HepG2 (cell line): ENCODE measurements at regions of chr3 and their contacts with region 1.

Region 1: DNA sequence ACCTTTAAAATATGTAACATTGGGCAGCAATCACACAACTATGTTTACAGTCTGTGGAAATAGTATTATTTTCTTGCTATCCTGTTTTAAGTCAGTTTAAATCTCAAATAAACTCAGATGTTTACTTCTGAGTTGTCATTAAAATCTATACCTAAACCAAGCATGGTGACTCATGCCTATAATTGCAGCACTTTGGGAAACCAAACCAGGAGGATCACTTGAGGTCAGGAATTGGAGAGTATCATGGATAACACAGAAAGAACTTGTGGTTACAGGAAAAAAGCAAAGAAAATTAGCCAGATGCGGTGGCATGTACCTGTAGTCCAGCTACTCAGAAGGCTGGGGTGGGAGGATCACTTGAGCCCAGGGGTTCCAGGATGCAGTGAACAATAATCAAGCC is 631.6 kb upstream of the EPHA6 start:
- DNase-seq: no peak
- ATAC-seq: no peak
- H3K4me3 ChIP-seq: no peak overlapping the region
- H3K27ac ChIP-seq: no peak overlapping the region
- H3K4me1 ChIP-seq: no peaks in the 10 kb centered on the region
- H3K27me3 ChIP-seq: no peaks in the 10 kb centered on the region
- CTCF ChIP-seq: no peak
- EP300 ChIP-seq: no peak
- POLR2A ChIP-seq: no peak
- RAD21 ChIP-seq: no peak

Region 2: GRCh38 chr3:94573337-94573736 is 1609.4 kb before region 1 on chr3:
- CTCF ChIA-PET with region 1: no interaction called
- POLR2A ChIA-PET with region 1: no interaction called
- in situ Hi-C with region 1: no loop called
- intact Hi-C with region 1: loop called (anchors 5 kb)
- DNase-seq: no peak
- ATAC-seq: no peak
- H3K4me3 ChIP-seq: no peak overlapping the region
- H3K27ac ChIP-seq: no peak overlapping the region
- H3K4me1 ChIP-seq: no peaks in the 10 kb centered on the region
- H3K27me3 ChIP-seq: no peaks in the 10 kb centered on the region
- CTCF ChIP-seq: no peak
- EP300 ChIP-seq: no peak
- POLR2A ChIP-seq: no peak
- RAD21 ChIP-seq: no peak

Region 3: DNA sequence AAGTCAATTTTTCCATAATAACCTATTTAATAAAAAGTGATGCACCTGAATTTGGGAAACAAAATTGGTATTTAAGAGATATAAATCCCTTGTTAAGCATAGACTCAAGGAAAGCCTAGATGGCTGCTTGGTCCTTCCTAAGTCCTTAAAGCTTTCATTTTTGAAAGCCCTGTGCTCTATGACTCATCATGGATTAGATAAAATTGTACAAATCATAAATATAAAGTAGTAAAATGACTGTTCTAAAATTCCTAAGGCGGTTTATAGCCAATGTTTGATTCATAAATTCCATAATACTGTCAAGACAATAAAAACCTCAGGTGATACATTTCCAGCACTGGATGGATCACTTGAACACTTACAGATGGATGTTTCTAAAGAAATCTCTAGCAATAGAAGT is 99.1 kb before region 1 on chr3:
- CTCF ChIA-PET with region 1: no interaction called
- POLR2A ChIA-PET with region 1: no interaction called
- in situ Hi-C with region 1: no loop called
- intact Hi-C with region 1: no loop called
- DNase-seq: no peak
- ATAC-seq: no peak
- H3K4me3 ChIP-seq: no peak overlapping the region
- H3K27ac ChIP-seq: no peak overlapping the region
- H3K4me1 ChIP-seq: no peaks in the 10 kb centered on the region
- H3K27me3 ChIP-seq: no peaks in the 10 kb centered on the region
- CTCF ChIP-seq: no peak
- EP300 ChIP-seq: no peak
- POLR2A ChIP-seq: no peak
- RAD21 ChIP-seq: no peak

Region 4: DNA sequence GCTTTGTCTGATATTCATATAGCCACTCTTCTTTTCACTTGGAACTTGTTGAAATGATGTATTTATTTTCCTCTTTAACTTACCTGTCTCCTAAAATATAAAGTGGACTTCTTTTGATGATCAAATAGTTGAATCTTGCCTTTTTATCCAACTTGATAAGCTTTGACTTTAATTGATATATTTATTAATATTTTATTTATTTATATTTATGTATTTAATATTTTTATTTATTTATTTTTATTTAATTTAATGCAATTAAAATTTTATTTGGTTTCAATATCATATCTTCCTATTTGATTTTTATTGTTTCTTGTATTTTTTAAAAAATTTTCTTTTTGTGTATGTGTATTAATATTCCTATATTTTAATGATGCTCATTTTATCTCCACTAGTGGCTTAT is 76.5 kb after region 1 on chr3:
- CTCF ChIA-PET with region 1: no interaction called
- POLR2A ChIA-PET with region 1: no interaction called
- in situ Hi-C with region 1: no loop called
- intact Hi-C with region 1: no loop called
- DNase-seq: no peak
- ATAC-seq: no peak
- H3K4me3 ChIP-seq: no peak overlapping the region
- H3K27ac ChIP-seq: no peak overlapping the region
- H3K4me1 ChIP-seq: no peaks in the 10 kb centered on the region
- H3K27me3 ChIP-seq: no peaks in the 10 kb centered on the region
- CTCF ChIP-seq: no peak
- EP300 ChIP-seq: no peak
- POLR2A ChIP-seq: no peak
- RAD21 ChIP-seq: no peak